ENCODE measurements at regions of chr12 and their contacts with region 1.

Region 1: GRCh38 chr12:131264625-131265024 is 310.9 kb downstream of the ADGRD1 start:
- DNase-seq: peak in 1 of 5 donors; percentile 9
- ATAC-seq: no peak
- H3K4me3 ChIP-seq: no peak overlapping the region
- H3K27ac ChIP-seq: no peak overlapping the region
- H3K4me1 ChIP-seq: peaks cover 0 to 6% (median 0%) of the 10 kb centered on the region in 12 donors
- H3K27me3 ChIP-seq: no peaks in the 10 kb centered on the region
- CTCF ChIP-seq: no peak
- POLR2A ChIP-seq: no peak

Region 2: DNA sequence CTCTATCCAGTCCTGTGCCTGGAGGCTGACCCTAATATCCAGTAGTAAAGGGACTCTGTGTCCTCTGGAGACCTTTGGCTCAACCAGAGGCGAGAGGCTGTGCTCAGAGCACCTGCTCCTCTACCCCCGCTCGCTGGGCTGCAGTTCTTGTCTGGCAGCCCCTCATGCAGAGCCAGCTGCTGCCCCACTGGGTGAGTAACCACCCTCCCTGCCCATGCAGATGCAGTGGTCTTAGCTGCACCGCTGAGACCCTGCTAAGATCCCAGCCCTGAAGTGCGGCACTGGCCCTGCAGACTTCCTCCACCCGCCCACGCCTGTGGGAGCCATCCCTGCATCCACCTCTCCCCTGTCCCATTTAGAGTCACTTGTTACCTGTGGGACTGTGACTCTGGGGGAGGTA is 98.8 kb after region 1 on chr12:
- intact Hi-C with region 1: no loop called
- DNase-seq: peak in 1 of 5 donors; percentile 20
- ATAC-seq: no peak
- H3K4me3 ChIP-seq: no peak overlapping the region
- H3K27ac ChIP-seq: no peak overlapping the region
- H3K4me1 ChIP-seq: no peaks in the 10 kb centered on the region
- H3K27me3 ChIP-seq: peaks cover 0 to 9% (median 0%) of the 10 kb centered on the region in 9 donors
- CTCF ChIP-seq: no peak
- POLR2A ChIP-seq: no peak

Region 3: GRCh38 chr12:131402781-131403396 is 138.3 kb after region 1 on chr12:
- intact Hi-C with region 1: loop called in 4 of 10 experiments (anchors 2 to 5 kb)
- DNase-seq: no peak
- ATAC-seq: no peak
- H3K4me3 ChIP-seq: no peak overlapping the region
- H3K27ac ChIP-seq: no peak overlapping the region
- H3K4me1 ChIP-seq: no peaks in the 10 kb centered on the region
- H3K27me3 ChIP-seq: peaks cover 0 to 4% (median 0%) of the 10 kb centered on the region in 9 donors
- CTCF ChIP-seq: no peak
- POLR2A ChIP-seq: no peak